ENCODE measurements at regions of chr17 and their contacts with region 1.

Region 1: GRCh38 chr17:8016632-8017478 is 14.4 kb downstream of the GUCY2D start:
- DNase-seq: peak; percentile 62 to 66
- ATAC-seq: peak; percentile 76 to 92
- H3K4me3 ChIP-seq: peak overlapping the region; percentile 47
- H3K27ac ChIP-seq: peak overlapping the region; percentile 62 to 70; a peak in 5 of 6 replicates
- H3K4me1 ChIP-seq: peaks cover 5% of the 10 kb centered on the region; the same call in 1 of the 3 replicates
- CTCF ChIP-seq: peak; percentile 89
- EP300 ChIP-seq: no peak
- POLR2A ChIP-seq: no peak
- RAD21 ChIP-seq: peak; percentile 72 to 77

Region 2: DNA sequence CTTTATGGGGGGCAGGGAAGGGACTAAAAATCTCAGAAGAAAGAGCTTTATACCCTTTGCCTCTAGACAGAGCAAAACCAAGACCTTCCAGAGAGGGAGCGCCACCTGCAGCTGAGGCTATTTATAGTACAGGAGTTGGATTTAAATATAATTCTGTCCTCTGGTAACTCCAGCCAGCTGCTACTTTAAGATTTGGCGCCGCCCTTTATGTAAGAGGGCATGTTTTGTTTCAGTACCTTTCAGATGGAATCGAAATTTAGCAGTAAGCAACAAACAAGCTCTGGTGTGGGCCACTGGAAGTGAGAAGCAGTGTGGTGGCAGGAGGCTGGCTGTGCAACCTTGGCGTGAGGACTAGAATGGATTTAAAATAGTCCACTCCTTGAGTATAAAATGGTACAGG is 19.7 kb before region 1 on chr17:
- CTCF ChIA-PET with region 1: interaction called, 60 read pairs
- POLR2A ChIA-PET with region 1: no interaction called
- DNase-seq: peak; percentile 67 to 68
- ATAC-seq: peak; percentile 94 to 95
- H3K4me3 ChIP-seq: no peak overlapping the region
- H3K27ac ChIP-seq: no peak overlapping the region
- H3K4me1 ChIP-seq: no peaks in the 10 kb centered on the region
- CTCF ChIP-seq: peak; percentile 70
- EP300 ChIP-seq: no peak
- POLR2A ChIP-seq: no peak
- RAD21 ChIP-seq: peak; percentile 40 to 44; a peak in 3 of 5 replicates

Region 3: GRCh38 chr17:8029135-8029534 is 12.3 kb after region 1 on chr17:
- CTCF ChIA-PET with region 1: interaction called, 86 read pairs
- POLR2A ChIA-PET with region 1: no interaction called
- DNase-seq: no peak
- ATAC-seq: peak in 1 of 2 experiments; percentile 32; a peak in 2 of 6 replicates
- H3K4me3 ChIP-seq: no peak overlapping the region
- H3K27ac ChIP-seq: no peak overlapping the region
- H3K4me1 ChIP-seq: peaks cover 7% of the 10 kb centered on the region; the same call in 2 of the 3 replicates
- CTCF ChIP-seq: no peak
- EP300 ChIP-seq: no peak
- POLR2A ChIP-seq: no peak
- RAD21 ChIP-seq: no peak

Region 4: DNA sequence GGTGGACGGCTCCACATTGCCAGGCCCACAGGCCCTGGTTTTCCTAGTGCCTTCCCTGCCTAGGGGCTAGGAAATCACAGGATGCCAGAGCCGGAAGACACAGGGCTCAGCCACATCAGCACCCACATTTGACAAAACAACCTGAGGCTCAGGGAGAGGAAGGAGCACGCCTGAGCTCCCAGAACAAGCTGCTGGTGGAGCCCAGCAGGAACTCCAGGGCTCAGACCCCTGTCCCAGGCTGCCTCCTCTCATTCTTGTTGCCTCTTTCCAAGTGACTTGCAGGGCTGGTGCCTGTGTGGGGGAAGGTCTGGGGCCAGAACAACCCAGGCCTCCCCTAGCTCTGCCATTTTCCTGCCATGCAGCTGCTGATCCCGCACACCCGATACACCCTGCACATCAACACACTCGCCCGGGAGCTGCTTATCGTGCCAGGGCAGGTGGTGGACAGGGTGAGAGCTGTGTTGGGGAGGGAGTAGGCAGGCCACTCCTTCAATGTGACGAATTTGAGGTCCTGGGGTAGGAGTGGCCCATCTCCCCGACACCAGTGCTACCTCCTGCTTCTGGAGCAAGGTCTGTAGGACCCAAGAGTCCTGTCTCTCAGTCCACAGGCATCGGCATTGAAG is 29.6 kb after region 1 on chr17:
- CTCF ChIA-PET with region 1: interaction called, 143 read pairs
- POLR2A ChIA-PET with region 1: no interaction called
- DNase-seq: no peak
- ATAC-seq: no peak
- H3K4me3 ChIP-seq: no peak overlapping the region
- H3K27ac ChIP-seq: no peak overlapping the region
- H3K4me1 ChIP-seq: no peaks in the 10 kb centered on the region
- CTCF ChIP-seq: no peak
- EP300 ChIP-seq: no peak
- POLR2A ChIP-seq: no peak
- RAD21 ChIP-seq: no peak

Region 5: GRCh38 chr17:8073627-8074484 is 57.0 kb after region 1 on chr17:
- CTCF ChIA-PET with region 1: interaction called, 16 read pairs
- POLR2A ChIA-PET with region 1: interaction called, 6 read pairs
- DNase-seq: peak; percentile 84 to 91
- ATAC-seq: peak; percentile 75 to 92
- H3K4me3 ChIP-seq: peak overlapping the region; percentile 34
- H3K27ac ChIP-seq: peak overlapping the region in 1 of 2 experiments; percentile 27; a peak in 2 of 6 replicates
- H3K4me1 ChIP-seq: peaks cover 15% of the 10 kb centered on the region
- CTCF ChIP-seq: peak; percentile 97
- EP300 ChIP-seq: no peak
- POLR2A ChIP-seq: no peak
- RAD21 ChIP-seq: peak; percentile 35 to 42; a peak in 2 of 5 replicates

Region 6: GRCh38 chr17:8091033-8091687 is 74.3 kb after region 1 on chr17:
- CTCF ChIA-PET with region 1: interaction called, 10 read pairs
- POLR2A ChIA-PET with region 1: no interaction called
- DNase-seq: no peak
- ATAC-seq: no peak
- H3K4me3 ChIP-seq: no peak overlapping the region
- H3K27ac ChIP-seq: no peak overlapping the region
- H3K4me1 ChIP-seq: no peaks in the 10 kb centered on the region
- CTCF ChIP-seq: no peak
- EP300 ChIP-seq: no peak
- POLR2A ChIP-seq: no peak
- RAD21 ChIP-seq: no peak

Region 7: DNA sequence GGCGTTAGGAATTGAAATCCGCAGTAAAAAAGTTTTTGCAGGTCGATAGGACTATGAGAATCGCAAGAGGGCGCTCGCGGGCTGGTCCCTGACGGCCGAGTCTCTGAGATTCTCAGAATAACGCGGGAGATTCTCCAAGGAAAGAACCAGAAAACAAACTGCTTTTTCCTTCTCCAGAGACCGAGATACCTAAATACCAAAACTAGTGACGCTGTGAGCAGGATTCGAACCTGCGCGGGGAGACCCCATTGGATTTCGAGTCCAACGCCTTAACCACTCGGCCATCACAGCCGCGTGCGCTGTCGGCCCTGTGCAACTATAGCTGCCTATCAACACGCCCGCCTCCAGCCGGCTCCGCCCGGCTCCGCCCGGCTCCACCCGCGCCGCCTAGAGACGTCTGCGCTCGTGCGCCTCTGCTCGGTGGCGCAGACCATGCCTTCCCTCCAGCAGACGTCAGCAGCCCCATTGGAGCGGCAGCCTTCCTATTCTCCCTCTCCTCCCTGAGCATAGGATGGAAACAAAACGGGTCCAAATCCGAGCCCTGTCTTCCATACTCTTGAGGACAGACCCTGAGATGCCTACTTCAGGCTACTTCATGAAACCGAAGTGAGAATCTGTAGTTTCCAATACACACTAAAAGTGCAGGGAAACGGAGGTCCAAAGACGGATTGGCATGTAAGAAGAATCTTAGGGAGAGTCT is 122.0 kb after region 1 on chr17:
- CTCF ChIA-PET with region 1: no interaction called
- POLR2A ChIA-PET with region 1: no interaction called
- DNase-seq: peak; percentile 93 to 99
- ATAC-seq: peak; percentile 86 to 94
- H3K4me3 ChIP-seq: peak overlapping the region; percentile 58
- H3K27ac ChIP-seq: peak overlapping the region; percentile 82 to 86
- H3K4me1 ChIP-seq: peaks cover 22% of the 10 kb centered on the region
- CTCF ChIP-seq: peak; percentile 98
- EP300 ChIP-seq: peak in 1 of 2 experiments; percentile 27; a peak in 1 of 5 replicates
- POLR2A ChIP-seq: peak; percentile 47; the same call in 1 of the 2 replicates
- RAD21 ChIP-seq: peak; percentile 90 to 93